ENCODE measurements at regions of chr3 and their contacts with region 1.

Region 1: DNA sequence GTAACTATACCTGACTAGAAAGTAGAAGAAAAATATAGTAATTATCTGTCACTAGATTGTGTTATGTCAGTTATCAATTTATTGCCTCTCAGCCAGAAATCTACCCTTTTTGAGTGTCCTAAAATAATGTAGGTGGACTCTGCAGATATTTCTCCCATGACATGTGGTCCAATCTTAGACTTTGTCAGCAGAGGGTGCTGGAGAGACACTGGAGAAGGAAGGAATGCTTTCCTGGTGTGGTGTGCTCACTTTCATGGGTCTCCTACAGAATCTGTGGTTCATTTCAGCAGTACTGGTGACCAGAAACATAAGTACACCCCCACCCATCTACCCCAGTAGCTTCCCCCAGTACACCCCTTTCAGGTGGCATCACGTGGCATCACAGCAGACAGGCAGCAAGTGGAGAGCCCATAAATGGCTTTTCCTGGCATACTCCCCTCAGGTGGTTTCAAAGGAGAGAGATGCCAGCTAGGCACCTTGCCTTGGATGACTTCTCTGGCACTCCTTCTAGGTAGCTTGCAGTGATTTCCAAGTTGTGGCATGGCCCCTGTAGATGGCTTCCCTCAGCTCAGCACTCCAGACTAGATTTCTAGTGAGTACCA is 114.7 kb downstream of the GADL1 start:
- DNase-seq: no peak
- ATAC-seq: no peak
- H3K4me3 ChIP-seq: no peak overlapping the region
- H3K27ac ChIP-seq: no peak overlapping the region
- H3K4me1 ChIP-seq: no peaks in the 10 kb centered on the region
- H3K27me3 ChIP-seq: no peaks in the 10 kb centered on the region
- CTCF ChIP-seq: peak in 8 of 9 donors; percentile 16 to 56 (median 44)

Region 2: GRCh38 chr3:30511524-30512278 is 268.1 kb before region 1 on chr3:
- intact Hi-C with region 1: no loop called
- DNase-seq: no peak
- ATAC-seq: peak; percentile 64 to 96 (median 83)
- H3K4me3 ChIP-seq: no peak overlapping the region
- H3K27ac ChIP-seq: peak overlapping the region in 8 of 10 donors; percentile 11 to 51 (median 30)
- H3K4me1 ChIP-seq: peaks cover 0 to 20% (median 0%) of the 10 kb centered on the region in 9 donors
- H3K27me3 ChIP-seq: no peaks in the 10 kb centered on the region
- CTCF ChIP-seq: no peak

Region 3: GRCh38 chr3:30904986-30905657 is 125.3 kb after region 1 on chr3:
- intact Hi-C with region 1: loop called in 1 of 10 experiments (anchors 10 kb)
- DNase-seq: no peak
- ATAC-seq: no peak
- H3K4me3 ChIP-seq: no peak overlapping the region
- H3K27ac ChIP-seq: no peak overlapping the region
- H3K4me1 ChIP-seq: no peaks in the 10 kb centered on the region
- H3K27me3 ChIP-seq: no peaks in the 10 kb centered on the region
- CTCF ChIP-seq: no peak

Region 4: GRCh38 chr3:31004025-31004678 is 224.4 kb after region 1 on chr3:
- intact Hi-C with region 1: loop called in 2 of 10 experiments (anchors 10 kb)
- DNase-seq: no peak
- ATAC-seq: peak in 5 of 8 donors; percentile 19 to 58 (median 45)
- H3K4me3 ChIP-seq: no peak overlapping the region
- H3K27ac ChIP-seq: no peak overlapping the region
- H3K4me1 ChIP-seq: peaks cover 0 to 4% (median 0%) of the 10 kb centered on the region in 9 donors
- H3K27me3 ChIP-seq: no peaks in the 10 kb centered on the region
- CTCF ChIP-seq: no peak

Region 5: DNA sequence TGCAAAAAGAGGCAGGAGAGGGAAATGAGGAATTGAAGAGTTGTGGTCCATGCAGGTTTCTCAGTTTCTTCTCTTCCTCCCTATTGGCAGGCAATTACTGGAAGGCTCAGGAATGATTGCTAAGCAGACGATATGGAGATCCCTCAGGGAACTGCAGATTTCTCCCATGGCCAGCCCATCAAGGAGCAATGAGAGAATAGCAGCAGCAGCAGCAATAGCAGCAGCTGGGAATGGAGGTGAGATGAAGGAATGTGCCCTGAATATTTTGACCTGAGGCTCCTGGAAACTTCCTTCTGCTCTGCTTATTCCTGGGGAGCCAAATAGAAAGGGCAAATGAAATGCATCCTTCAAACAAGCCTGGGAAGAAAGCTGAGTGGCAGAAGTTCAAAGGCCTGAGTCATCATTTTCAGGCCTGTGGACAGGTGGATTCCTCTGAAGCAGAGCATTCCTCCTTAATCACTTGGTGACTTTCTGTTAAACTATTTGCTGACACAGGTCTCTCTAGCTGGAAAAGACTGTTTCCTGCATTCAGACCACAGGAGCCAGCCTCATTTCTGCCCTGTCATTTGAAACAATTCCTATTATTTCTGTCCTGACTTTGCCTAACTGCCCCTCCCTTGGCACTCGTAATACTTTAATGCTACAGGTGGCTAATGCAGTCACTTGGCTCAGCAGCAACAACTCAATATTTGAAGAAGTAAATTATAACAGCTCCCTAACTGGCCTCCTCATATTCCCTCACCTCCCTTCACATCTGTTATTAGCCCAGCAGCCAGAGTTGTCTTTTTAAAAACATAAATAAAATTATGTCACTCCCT is 261.6 kb after region 1 on chr3:
- intact Hi-C with region 1: no loop called
- DNase-seq: no peak
- ATAC-seq: no peak
- H3K4me3 ChIP-seq: no peak overlapping the region
- H3K27ac ChIP-seq: no peak overlapping the region
- H3K4me1 ChIP-seq: no peaks in the 10 kb centered on the region
- H3K27me3 ChIP-seq: no peaks in the 10 kb centered on the region
- CTCF ChIP-seq: no peak

Region 6: DNA sequence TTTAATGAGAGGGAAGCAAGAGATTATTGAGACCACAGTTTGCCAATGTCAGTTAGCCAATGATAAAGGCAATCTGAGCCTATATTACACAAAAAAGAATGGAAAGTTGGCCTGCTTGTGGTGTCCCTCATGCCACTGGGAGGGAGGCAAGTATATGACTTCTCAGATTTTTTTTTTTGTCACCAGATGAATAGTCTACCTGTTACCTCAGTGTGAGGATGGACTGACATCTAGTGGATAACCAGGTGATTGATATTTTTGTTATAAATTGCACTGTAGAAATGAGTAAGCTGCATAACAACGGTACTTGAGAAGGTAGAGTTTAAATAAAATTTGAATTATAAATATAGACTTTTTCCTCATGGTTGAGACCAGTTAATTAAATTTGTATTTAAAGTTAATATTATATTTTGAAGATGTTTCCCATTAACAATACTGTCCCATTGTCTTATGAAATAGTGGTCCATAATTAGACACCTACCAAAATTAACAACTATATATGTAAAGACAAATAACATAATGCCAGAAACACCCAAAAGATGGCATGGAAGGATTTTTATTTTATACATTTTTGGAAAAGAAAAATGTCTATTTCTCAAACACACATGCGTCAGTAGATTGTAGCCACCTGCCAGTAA is 352.5 kb after region 1 on chr3:
- intact Hi-C with region 1: loop called in 2 of 10 experiments (anchors 10 kb)
- DNase-seq: no peak
- ATAC-seq: peak in 3 of 8 donors; percentile 19 to 64 (median 55)
- H3K4me3 ChIP-seq: no peak overlapping the region
- H3K27ac ChIP-seq: no peak overlapping the region
- H3K4me1 ChIP-seq: no peaks in the 10 kb centered on the region
- H3K27me3 ChIP-seq: no peaks in the 10 kb centered on the region
- CTCF ChIP-seq: peak; percentile 16 to 79 (median 59)

Region 7: GRCh38 chr3:31777092-31777491 is 997.3 kb after region 1 on chr3:
- intact Hi-C with region 1: loop called in 1 of 10 experiments (anchors 10 kb)
- DNase-seq: no peak
- ATAC-seq: no peak
- H3K4me3 ChIP-seq: no peak overlapping the region
- H3K27ac ChIP-seq: no peak overlapping the region
- H3K4me1 ChIP-seq: no peaks in the 10 kb centered on the region
- H3K27me3 ChIP-seq: no peaks in the 10 kb centered on the region
- CTCF ChIP-seq: no peak